BJ (cell line): ENCODE measurements at regions of chr1 and their contacts with region 1.

Region 1: GRCh38 chr1:163315773-163316374 is 5.9 kb upstream of the NUF2 start:
- DNase-seq: no peak
- H3K4me3 ChIP-seq: no peak overlapping the region
- H3K27me3 ChIP-seq: no peaks in the 10 kb centered on the region
- CTCF ChIP-seq: peak; percentile 47; the same call in 1 of the 2 replicates

Region 2: DNA sequence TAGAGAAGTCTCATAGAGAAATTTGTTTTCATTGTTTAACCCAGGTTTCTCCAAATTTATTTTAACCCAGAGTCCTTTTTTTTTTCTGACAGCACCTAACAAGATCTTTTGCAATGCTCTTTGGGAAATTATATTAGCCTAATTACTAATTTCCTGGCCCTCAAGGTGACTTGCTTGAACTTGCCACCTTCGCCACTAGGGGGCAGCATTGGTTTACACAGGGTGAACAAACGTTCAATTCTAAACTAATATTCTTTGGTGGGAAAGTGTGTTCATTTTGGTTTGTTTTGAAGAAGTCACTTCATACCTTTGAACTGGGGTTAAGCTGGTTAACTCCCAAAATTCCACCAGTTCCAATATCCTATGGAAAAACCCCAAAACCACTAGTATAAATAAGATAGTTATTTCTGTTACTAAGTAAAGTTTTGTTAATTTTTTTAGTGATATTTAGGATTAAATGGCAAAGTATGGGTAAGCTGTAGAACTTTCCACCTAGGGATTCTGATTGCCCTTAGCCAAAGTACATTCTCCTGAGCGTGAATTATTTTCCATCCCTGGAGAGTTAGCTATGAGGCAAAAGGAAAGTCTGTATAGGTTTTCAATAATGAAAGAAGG is 467.9 kb before region 1 on chr1:
- CTCF ChIA-PET with region 1: interaction called, 31 read pairs
- POLR2A ChIA-PET with region 1: no interaction called
- DNase-seq: no peak
- H3K4me3 ChIP-seq: no peak overlapping the region
- H3K27me3 ChIP-seq: no peaks in the 10 kb centered on the region
- CTCF ChIP-seq: peak; percentile 87

Region 3: GRCh38 chr1:162854245-162854882 is 461.5 kb before region 1 on chr1:
- CTCF ChIA-PET with region 1: interaction called, 31 read pairs
- POLR2A ChIA-PET with region 1: no interaction called
- DNase-seq: peak; percentile 19
- H3K4me3 ChIP-seq: no peak overlapping the region
- H3K27me3 ChIP-seq: no peaks in the 10 kb centered on the region
- CTCF ChIP-seq: peak; percentile 77

Region 4: DNA sequence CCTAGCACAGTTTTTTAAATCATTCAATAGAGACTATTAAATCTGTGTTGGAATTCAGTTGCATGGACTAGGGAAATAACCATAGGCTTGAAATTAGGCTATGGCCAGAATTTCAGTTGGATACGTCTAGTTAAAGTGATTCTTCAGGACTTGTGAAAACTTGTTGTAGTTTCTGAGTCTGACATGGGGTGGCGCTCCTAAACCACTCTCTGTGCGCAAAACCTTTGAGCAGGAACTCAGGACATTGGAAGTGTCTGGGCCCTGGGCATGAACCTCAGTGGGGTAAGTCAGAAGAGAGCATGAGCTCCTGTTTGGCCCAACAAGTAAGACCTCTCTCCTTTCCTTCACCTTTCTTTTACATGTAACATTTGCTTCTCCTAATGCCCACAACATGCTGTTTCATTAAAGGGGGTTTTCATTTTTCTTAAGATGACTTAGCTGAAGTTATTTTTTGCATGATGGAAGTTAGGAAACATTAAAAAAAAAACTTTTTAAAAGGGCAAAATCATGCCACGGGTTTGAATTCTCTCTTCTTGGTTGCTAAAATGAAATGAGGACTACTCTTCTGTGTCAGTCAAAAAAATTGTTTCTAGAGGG is 437.8 kb before region 1 on chr1:
- CTCF ChIA-PET with region 1: interaction called, 11 read pairs
- POLR2A ChIA-PET with region 1: no interaction called
- DNase-seq: no peak
- H3K4me3 ChIP-seq: no peak overlapping the region
- H3K27me3 ChIP-seq: no peaks in the 10 kb centered on the region
- CTCF ChIP-seq: peak; percentile 81

Region 5: GRCh38 chr1:162886705-162887104 is 429.2 kb before region 1 on chr1:
- CTCF ChIA-PET with region 1: interaction called, 10 read pairs
- POLR2A ChIA-PET with region 1: no interaction called
- DNase-seq: no peak
- H3K4me3 ChIP-seq: no peak overlapping the region
- H3K27me3 ChIP-seq: no peaks in the 10 kb centered on the region
- CTCF ChIP-seq: no peak

Region 6: GRCh38 chr1:163174524-163175437 is 141.1 kb before region 1 on chr1:
- CTCF ChIA-PET with region 1: interaction called, 46 read pairs
- POLR2A ChIA-PET with region 1: no interaction called
- DNase-seq: no peak
- H3K4me3 ChIP-seq: no peak overlapping the region
- H3K27me3 ChIP-seq: no peaks in the 10 kb centered on the region
- CTCF ChIP-seq: peak; percentile 88